BJ (cell line): ENCODE measurements at regions of chr17 and their contacts with region 1.

Region 1: DNA sequence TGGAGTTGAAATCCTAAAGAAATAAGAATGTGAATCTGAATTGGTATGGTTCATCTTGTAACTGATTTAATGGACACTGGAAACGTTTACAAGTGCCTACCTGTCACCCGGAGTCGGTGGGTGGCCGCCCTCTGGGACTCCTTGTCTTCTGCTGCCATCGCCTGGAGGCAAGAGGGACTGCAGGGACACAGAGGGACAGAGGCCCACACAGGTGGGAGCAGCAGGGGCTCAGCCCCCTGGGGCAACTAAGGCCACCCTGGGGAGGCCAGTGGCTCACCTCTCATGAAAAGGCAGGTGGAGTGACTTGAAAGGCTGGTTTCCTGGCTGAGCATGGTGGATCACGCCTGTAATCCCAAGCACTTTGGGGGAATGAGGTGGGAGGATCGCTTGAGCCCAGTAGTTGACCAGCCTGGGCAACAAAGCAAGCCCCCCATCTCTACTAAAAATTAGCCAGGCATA is 23.2 kb downstream of the TMEM92 start:
- DNase-seq: no peak
- H3K4me3 ChIP-seq: no peak overlapping the region
- H3K27me3 ChIP-seq: peaks cover 1% of the 10 kb centered on the region; the same call in 1 of the 2 replicates
- CTCF ChIP-seq: peak; percentile 97

Region 2: DNA sequence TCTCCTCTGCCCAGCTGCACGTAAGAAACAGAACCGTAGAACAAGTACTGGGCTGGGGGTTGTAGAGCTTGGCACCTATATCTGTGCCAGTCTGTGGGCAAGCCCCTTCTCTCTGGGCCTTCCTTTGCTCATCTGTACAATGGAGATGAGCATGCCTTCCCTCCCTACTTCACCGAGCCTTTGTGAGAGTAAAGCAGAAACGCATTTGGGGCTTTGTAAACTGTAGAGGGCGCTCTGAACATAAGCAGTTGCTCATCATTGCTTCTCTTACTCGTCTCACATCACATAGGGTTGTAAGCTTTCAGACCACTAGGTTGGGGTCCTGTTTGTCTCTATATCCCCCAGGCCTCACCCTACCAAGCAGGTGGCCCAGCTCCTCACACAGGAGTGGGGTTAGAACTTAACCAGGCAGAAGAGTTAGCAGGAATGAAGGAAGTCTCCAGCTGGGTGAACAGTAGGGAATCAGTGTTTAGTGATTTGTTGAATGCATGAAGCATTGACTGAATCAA is 182.5 kb before region 1 on chr17:
- CTCF ChIA-PET with region 1: interaction called, 53 read pairs
- POLR2A ChIA-PET with region 1: no interaction called
- DNase-seq: no peak
- H3K4me3 ChIP-seq: no peak overlapping the region
- H3K27me3 ChIP-seq: peaks cover 2% of the 10 kb centered on the region
- CTCF ChIP-seq: peak; percentile 75

Region 3: GRCh38 chr17:50161023-50161910 is 136.2 kb before region 1 on chr17:
- CTCF ChIA-PET with region 1: interaction called, 229 read pairs
- POLR2A ChIA-PET with region 1: no interaction called
- DNase-seq: no peak
- H3K4me3 ChIP-seq: peak overlapping the region; percentile 60
- H3K27me3 ChIP-seq: no peaks in the 10 kb centered on the region
- CTCF ChIP-seq: peak; percentile 87

Region 4: GRCh38 chr17:50200457-50201275 is 96.8 kb before region 1 on chr17:
- CTCF ChIA-PET with region 1: interaction called, 5 read pairs
- POLR2A ChIA-PET with region 1: interaction called, 12 read pairs
- DNase-seq: no peak
- H3K4me3 ChIP-seq: peak overlapping the region; percentile 97
- H3K27me3 ChIP-seq: no peaks in the 10 kb centered on the region
- CTCF ChIP-seq: peak; percentile 90

Region 5: GRCh38 chr17:50279181-50279526 is 18.3 kb before region 1 on chr17:
- CTCF ChIA-PET with region 1: interaction called, 14 read pairs
- POLR2A ChIA-PET with region 1: no interaction called
- DNase-seq: no peak
- H3K4me3 ChIP-seq: no peak overlapping the region
- H3K27me3 ChIP-seq: no peaks in the 10 kb centered on the region
- CTCF ChIP-seq: no peak